ENCODE measurements at regions of chr2 and their contacts with region 1.

Region 1: GRCh38 chr2:96638144-96639121 is at the start of gene KANSL3:
- DNase-seq: peak; percentile 86 to 91
- H3K4me3 ChIP-seq: peak within 1 kb of the TSS; percentile 2 to 70 (median 48)
- H3K27ac ChIP-seq: peak within 1 kb of the TSS; percentile 64 to 87 (median 85)
- H3K4me1 ChIP-seq: peaks cover 32% of the 10 kb centered on the region in 2 donors
- H3K27me3 ChIP-seq: no peaks in the 10 kb centered on the region
- CTCF ChIP-seq: peak in 2 of 6 experiments; percentile 14 to 35
- POLR2A ChIP-seq: peak; percentile 87 to 92
- total RNA-seq, gene KANSL3: 46.2 to 65.5 (median 55.8) TPM

Region 2: GRCh38 chr2:96353032-96353561 is 285.3 kb before region 1 on chr2:
- intact Hi-C with region 1: no loop called
- DNase-seq: peak; percentile 46 to 47
- H3K4me3 ChIP-seq: no peak overlapping the region
- H3K27ac ChIP-seq: no peak overlapping the region
- H3K4me1 ChIP-seq: peaks cover 0 to 20% of the 10 kb centered on the region in 2 donors
- H3K27me3 ChIP-seq: no peaks in the 10 kb centered on the region
- CTCF ChIP-seq: no peak
- POLR2A ChIP-seq: no peak

Region 3: GRCh38 chr2:96374211-96374951 is 264.1 kb before region 1 on chr2:
- intact Hi-C with region 1: no loop called
- DNase-seq: peak; percentile 70 to 72
- H3K4me3 ChIP-seq: no peak overlapping the region
- H3K27ac ChIP-seq: no peak overlapping the region
- H3K4me1 ChIP-seq: peaks cover 6 to 11% of the 10 kb centered on the region in 2 donors
- H3K27me3 ChIP-seq: no peaks in the 10 kb centered on the region
- CTCF ChIP-seq: no peak
- POLR2A ChIP-seq: no peak

Region 4: GRCh38 chr2:96536445-96537065 is 101.9 kb before region 1 on chr2 and contains the start of gene ARID5A:
- intact Hi-C with region 1: loop called (anchors 10 kb)
- DNase-seq: peak; percentile 95 to 96
- H3K4me3 ChIP-seq: peak within 1 kb of the TSS; percentile 68 to 91 (median 71)
- H3K27ac ChIP-seq: peak within 1 kb of the TSS; percentile 67 to 94 (median 93)
- H3K4me1 ChIP-seq: peaks cover 42 to 64% of the 10 kb centered on the region in 2 donors
- H3K27me3 ChIP-seq: no peaks in the 10 kb centered on the region
- CTCF ChIP-seq: peak in 5 of 6 experiments; percentile 29 to 62 (median 51)
- POLR2A ChIP-seq: peak; percentile 77 to 92
- total RNA-seq, gene ARID5A: 9.2 to 29.3 (median 20.0) TPM

Region 5: GRCh38 chr2:96760036-96760985 is 121.9 kb after region 1 on chr2 and contains the start of gene CNNM4:
- intact Hi-C with region 1: loop called (anchors 5 kb)
- DNase-seq: peak; percentile 98
- H3K4me3 ChIP-seq: peak within 1 kb of the TSS in 2 of 3 donors; percentile 1 to 64
- H3K27ac ChIP-seq: peak within 1 kb of the TSS; percentile 2 to 85 (median 67)
- H3K4me1 ChIP-seq: peaks cover 38 to 45% of the 10 kb centered on the region in 2 donors
- H3K27me3 ChIP-seq: no peaks in the 10 kb centered on the region
- CTCF ChIP-seq: peak in 1 of 6 experiments; percentile 24
- POLR2A ChIP-seq: peak in 1 of 2 donors; percentile 82
- total RNA-seq, gene CNNM4: 6.6 to 9.5 (median 7.7) TPM

Region 6: DNA sequence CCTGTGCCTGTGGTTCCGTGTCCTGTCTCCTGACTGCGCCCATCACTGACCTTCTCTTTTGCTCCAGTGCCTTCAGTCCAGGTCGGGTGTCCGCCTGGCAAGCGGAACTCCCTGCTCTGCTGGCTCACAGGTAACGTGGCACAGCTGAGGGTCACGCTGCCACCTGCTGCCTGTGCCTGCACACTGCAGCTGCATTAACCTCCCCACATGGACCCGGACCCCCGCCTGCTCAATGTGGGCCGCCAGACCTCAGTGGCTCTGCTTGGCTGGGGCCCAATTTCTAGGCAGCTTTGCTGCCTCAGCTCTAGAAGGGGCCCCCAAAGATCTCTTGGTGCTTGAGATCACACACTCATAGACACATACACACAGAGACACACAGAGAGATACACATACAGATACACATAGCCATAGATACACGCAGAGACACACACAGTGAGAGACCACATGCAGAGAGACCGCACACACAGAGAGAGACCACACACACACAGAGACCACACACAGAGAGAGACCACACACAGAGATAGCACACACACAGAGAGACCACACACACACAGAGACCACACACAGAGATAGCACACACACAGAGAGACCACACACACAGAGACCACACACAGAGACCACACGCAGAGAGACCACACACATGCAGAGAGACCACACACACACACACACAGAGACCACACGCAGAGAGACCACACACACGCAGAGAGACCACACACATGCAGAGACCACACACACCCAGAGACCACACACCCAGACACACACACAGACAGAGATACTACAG is 162.8 kb after region 1 on chr2:
- intact Hi-C with region 1: loop called (anchors 10 kb)
- DNase-seq: peak; percentile 89 to 91
- H3K4me3 ChIP-seq: no peak overlapping the region
- H3K27ac ChIP-seq: no peak overlapping the region
- H3K4me1 ChIP-seq: peaks cover 3 to 4% of the 10 kb centered on the region in 2 donors
- H3K27me3 ChIP-seq: no peaks in the 10 kb centered on the region
- CTCF ChIP-seq: peak; percentile 69 to 97 (median 94)
- POLR2A ChIP-seq: no peak

Region 7: GRCh38 chr2:96839293-96839874 is 201.0 kb after region 1 on chr2:
- intact Hi-C with region 1: no loop called
- DNase-seq: peak; percentile 84 to 87
- H3K4me3 ChIP-seq: no peak overlapping the region
- H3K27ac ChIP-seq: no peak overlapping the region
- H3K4me1 ChIP-seq: peaks cover 0 to 9% of the 10 kb centered on the region in 2 donors
- H3K27me3 ChIP-seq: no peaks in the 10 kb centered on the region
- CTCF ChIP-seq: no peak
- POLR2A ChIP-seq: no peak